Activated naive CD4-positive, alpha-beta T cell treated with anti-CD3 and anti-CD28 coated beads for 36 hours (primary cell): ENCODE measurements at regions of chr5 and their contacts with region 1.

Region 1: DNA sequence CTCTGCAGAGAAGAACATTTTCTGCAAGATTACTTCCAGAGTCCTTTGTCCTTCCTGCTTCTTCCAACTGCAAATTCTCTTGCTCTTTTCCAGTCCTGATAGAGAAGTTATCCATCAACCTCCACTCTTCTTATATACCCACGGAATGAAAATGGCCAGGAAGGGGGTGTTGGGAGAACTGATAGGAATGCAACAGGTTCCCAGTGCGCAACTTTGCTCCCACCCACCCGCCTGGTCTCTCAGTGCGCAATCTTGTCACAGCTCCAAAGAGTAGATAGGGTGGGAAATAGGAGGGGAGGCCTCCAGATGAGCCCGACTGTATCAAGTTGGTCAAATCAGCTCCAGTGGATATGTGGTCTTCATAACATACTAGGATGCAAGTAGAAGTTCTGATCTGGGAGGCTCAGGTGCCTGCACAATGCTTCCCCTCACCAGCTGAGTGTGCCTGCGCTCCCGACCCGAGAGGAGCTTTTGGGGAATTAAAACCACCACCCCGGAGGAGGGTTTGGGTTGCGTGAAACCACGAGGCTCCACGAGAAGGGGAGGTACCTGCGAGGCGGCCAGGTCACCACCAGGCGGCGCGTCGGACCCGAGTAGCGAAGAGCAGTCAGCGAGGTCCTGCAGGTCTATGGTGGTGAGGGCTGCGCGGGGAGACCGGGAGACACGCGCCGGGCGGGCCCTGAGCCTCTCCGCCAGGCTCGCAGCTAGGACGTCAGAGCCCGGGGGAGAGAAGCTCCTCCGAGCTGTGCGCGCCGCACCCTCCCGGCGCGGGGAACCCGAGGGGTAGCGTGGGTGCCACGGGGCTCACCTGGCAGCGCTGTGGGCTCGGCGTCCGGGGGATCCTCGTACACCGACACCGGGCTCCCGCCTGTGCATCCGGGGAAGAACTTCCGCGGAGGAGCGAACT is 835 bp downstream of the MCIDAS start:
- DNase-seq: peak; percentile 85
- H3K4me3 Mint-ChIP-seq: peak overlapping the region; percentile 65
- H3K27ac Mint-ChIP-seq: no peak overlapping the region
- H3K4me1 Mint-ChIP-seq: peaks cover 44% of the 10 kb centered on the region
- H3K27me3 Mint-ChIP-seq: peaks cover 86% of the 10 kb centered on the region

Region 2: GRCh38 chr5:55307383-55308253 is 81.3 kb after region 1 on chr5 and contains the starts of genes DHX29 and MTREX:
- CTCF ChIA-PET with region 1: interaction called, 3 read pairs
- intact Hi-C with region 1: loop called (anchors 1 kb)
- DNase-seq: peak; percentile 94
- H3K4me3 Mint-ChIP-seq: no peak within 1 kb of the TSS
- H3K27ac Mint-ChIP-seq: no peak within 1 kb of the TSS
- H3K4me1 Mint-ChIP-seq: peaks cover 33% of the 10 kb centered on the region
- H3K27me3 Mint-ChIP-seq: no peaks in the 10 kb centered on the region
- total RNA-seq, gene DHX29: 11.0 to 11.1 TPM
- total RNA-seq, gene MTREX: 76.1 to 79.7 TPM

Region 3: DNA sequence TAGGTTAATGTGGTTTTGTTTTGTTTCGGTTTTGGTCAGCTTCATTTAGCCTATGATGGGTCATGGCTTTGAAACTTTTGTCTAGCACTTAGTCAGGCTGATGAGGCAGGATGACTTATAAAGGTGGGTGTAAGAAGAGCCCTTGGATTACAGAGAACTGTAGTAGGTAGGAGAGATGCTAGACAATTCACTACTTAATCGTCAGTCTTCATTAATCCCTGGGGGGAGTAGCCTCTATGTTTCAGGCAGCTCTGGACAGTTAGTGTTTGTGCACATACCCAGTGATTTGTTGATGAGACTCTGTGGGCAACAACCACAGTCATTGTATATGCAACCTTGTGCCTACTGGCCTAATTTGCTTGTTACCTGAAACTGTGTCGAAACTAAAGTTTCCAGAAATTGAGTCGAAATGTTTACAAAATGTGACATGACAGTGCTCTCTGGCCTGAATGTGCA is 194.8 kb after region 1 on chr5:
- CTCF ChIA-PET with region 1: no interaction called
- intact Hi-C with region 1: loop called (anchors 5 kb)
- DNase-seq: peak; percentile 49
- H3K4me3 Mint-ChIP-seq: no peak overlapping the region
- H3K27ac Mint-ChIP-seq: no peak overlapping the region
- H3K4me1 Mint-ChIP-seq: peaks cover 33% of the 10 kb centered on the region
- H3K27me3 Mint-ChIP-seq: no peaks in the 10 kb centered on the region

Region 4: DNA sequence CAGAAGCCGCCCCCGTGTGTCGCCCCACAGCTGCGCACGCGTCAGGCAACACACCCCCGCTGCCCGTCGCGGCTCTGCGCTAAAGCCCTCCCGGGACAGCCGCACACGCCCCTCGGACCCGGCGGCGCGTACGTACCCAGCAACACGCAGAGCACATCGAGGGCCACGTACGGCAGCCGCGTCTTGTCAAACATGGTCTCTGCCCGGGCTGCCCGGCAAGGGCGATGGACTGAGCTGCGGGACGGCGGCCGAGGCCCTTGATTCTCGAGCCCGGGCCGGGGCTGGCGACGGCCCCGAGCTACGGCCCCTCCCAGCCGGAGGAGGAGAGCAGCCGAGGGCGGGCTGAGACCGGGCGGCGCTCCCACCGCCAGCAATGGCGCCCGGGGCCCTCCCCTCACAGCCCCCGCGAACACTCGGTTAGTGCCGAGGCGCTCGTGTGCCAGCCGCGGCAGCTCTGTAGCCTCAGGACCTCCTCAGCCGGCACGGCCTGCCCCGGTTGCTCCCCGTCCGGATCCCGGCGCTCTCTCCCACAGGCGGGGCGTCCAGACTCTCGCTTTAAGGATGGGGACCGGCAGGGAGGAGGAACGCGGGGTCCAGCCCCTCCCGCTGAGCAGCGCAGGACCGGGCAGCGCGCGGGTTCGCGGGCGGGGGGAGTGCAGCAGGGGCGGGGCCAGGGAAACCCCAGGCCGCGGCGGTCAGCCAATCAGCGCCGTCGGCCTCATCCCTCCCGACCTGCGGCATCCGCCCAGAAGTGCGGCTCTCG is 308.3 kb after region 1 on chr5 and contains the start of gene PLPP1:
- CTCF ChIA-PET with region 1: no interaction called
- intact Hi-C with region 1: loop called (anchors 2 kb)
- DNase-seq: peak; percentile 83
- H3K4me3 Mint-ChIP-seq: peak within 1 kb of the TSS; percentile 82
- H3K27ac Mint-ChIP-seq: peak within 1 kb of the TSS; percentile 86
- H3K4me1 Mint-ChIP-seq: peaks cover 29% of the 10 kb centered on the region
- H3K27me3 Mint-ChIP-seq: no peaks in the 10 kb centered on the region
- total RNA-seq, gene PLPP1: 7.3 to 8.3 TPM

Region 5: DNA sequence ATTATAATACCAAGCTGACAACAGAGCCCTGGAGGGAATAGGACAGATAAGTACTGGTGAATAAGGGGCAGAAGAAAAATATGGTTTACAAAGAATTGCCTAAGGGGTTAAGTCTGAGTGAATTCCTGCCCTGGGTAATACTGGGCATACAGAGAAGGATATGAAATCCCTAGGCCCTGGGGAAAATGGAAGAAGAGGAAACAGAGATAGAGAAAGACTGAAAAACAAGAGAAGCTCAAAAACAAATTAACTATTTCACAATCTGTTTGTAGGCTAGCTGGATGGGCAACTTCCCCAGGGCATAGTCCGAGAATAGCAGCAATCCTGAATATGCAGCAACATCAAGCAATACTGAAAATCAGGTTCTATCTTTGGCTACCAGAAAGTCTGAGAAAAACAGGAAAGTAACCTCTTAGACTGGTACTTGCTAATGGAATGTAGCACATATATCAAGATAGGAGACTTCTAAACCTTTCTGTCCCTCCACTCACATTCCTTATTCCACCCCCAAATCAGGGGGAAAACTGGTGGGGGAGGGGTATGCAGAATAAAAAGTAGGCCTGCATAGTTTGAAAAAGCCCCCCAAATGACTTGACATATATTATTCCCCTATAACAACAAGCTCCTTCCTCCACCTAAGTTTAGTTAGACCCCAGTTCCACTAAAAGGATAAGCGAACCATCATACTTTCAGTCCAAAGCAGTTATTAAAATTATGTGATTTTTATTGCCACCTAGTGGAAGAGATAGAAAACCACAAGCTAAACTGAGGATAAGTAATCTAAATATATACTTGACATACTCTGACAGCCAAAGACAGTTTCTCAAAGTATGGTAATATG is 465.2 kb after region 1 on chr5:
- CTCF ChIA-PET with region 1: no interaction called
- intact Hi-C with region 1: loop called (anchors 1 kb)
- DNase-seq: no peak
- H3K4me3 Mint-ChIP-seq: no peak overlapping the region
- H3K27ac Mint-ChIP-seq: no peak overlapping the region
- H3K4me1 Mint-ChIP-seq: peaks cover 3% of the 10 kb centered on the region
- H3K27me3 Mint-ChIP-seq: no peaks in the 10 kb centered on the region

Region 6: GRCh38 chr5:56050551-56051255 is 824.4 kb after region 1 on chr5:
- CTCF ChIA-PET with region 1: no interaction called
- intact Hi-C with region 1: loop called (anchors 10 kb)
- DNase-seq: no peak
- H3K4me3 Mint-ChIP-seq: peak overlapping the region; percentile 10
- H3K27ac Mint-ChIP-seq: peak overlapping the region; percentile 52
- H3K4me1 Mint-ChIP-seq: peaks cover 61% of the 10 kb centered on the region
- H3K27me3 Mint-ChIP-seq: no peaks in the 10 kb centered on the region

Region 7: DNA sequence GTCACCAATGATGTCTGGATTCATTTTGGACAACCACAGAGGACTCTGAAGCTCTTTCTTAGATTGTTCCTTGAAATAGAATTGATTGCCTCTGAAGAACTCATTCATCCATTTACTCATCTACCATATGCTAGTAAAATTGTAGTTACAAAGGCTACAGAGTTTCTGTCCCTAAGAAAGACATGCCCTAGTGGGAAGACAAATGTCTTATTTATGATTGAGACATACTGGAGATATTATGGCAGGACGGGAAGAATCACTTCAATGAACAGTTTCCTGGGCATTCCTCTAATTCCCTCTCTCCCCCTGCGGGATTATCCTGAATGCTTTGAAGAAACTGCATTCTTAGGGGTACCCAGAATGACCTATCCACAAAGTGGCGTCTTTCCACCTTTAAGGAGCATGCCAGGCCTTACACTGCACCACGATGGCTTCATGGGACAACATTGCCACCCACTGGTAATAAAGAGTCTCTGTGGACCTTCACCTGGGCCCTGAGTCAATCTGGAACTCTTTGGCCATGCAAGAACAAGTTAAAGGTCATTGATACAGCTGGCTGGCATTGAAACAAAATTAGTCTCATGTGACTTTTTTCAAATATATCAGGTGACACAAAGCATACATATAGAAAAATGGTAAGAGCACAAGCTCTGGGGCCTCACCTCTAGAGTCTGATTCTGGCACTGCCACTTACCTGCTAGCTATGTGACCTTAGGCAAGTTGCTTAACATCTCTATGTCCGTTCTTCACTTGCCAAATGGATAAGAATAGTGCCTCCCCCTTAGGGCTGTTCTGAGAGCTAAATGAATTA is 974.8 kb after region 1 on chr5:
- CTCF ChIA-PET with region 1: no interaction called
- intact Hi-C with region 1: loop called (anchors 10 kb)
- DNase-seq: peak; percentile 83
- H3K4me3 Mint-ChIP-seq: no peak overlapping the region
- H3K27ac Mint-ChIP-seq: no peak overlapping the region
- H3K4me1 Mint-ChIP-seq: peaks cover 28% of the 10 kb centered on the region
- H3K27me3 Mint-ChIP-seq: no peaks in the 10 kb centered on the region